ENCODE measurements at regions of chr3 and their contacts with region 1.

Region 1: GRCh38 chr3:69161587-69162307 is 39.4 kb upstream of the LMOD3 start:
- DNase-seq: peak; percentile 25
- ATAC-seq: peak; percentile 83
- H3K4me3 ChIP-seq: no peak overlapping the region
- H3K27ac ChIP-seq: no peak overlapping the region
- H3K4me1 ChIP-seq: no peaks in the 10 kb centered on the region
- H3K27me3 ChIP-seq: no peaks in the 10 kb centered on the region
- CTCF ChIP-seq: peak; percentile 89 to 95 (median 94); a peak in 5 of 6 replicates
- EP300 ChIP-seq: no peak
- POLR2A ChIP-seq: no peak
- RAD21 ChIP-seq: peak; percentile 100

Region 2: GRCh38 chr3:69129531-69129930 is 32.2 kb before region 1 on chr3:
- CTCF ChIA-PET with region 1: interaction called, 16 read pairs
- POLR2A ChIA-PET with region 1: no interaction called
- RAD21 ChIA-PET with region 1: interaction called, 6 read pairs
- SMC1A ChIA-PET with region 1: interaction called, 5 read pairs
- in situ Hi-C with region 1: no loop called
- intact Hi-C with region 1: no loop called
- DNase-seq: no peak
- ATAC-seq: no peak
- H3K4me3 ChIP-seq: no peak overlapping the region
- H3K27ac ChIP-seq: no peak overlapping the region
- H3K4me1 ChIP-seq: no peaks in the 10 kb centered on the region
- H3K27me3 ChIP-seq: no peaks in the 10 kb centered on the region; a peak in 1 of 4 replicates
- CTCF ChIP-seq: no peak
- EP300 ChIP-seq: no peak
- POLR2A ChIP-seq: no peak
- RAD21 ChIP-seq: no peak

Region 3: DNA sequence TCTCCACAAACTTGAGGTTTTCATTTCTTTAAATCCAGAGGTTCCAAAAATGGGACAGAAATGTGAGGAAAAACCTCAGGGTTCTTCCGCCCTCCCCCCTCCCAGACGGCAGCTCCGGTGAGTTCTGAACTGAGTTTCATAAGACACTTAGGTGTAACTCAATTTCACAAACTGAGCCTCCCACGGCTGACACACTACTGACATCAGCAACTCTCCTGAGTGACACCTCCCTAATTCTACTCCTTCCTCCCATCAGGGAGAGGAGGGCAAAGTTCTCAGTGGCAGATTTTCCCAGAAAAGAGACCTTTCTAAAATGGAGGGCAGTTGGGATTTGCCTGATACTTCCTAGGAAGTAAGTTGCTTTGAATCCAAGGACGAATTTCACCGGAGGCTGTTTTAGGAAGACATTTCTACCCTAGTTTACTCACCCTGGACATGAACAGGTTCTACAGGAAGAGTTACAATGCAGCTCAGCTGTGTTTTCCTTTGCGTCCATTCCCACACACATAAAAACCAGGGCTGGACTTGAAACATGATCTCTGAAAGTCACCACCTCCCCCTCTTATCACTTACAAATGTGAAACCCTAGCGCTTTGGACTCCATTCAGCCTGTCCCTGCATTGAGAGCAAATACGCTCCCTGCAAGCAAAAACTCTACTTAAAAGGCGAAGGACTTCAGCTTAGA is 38.8 kb after region 1 on chr3:
- CTCF ChIA-PET with region 1: interaction called, 16 read pairs
- POLR2A ChIA-PET with region 1: no interaction called
- RAD21 ChIA-PET with region 1: interaction called, 17 read pairs
- SMC1A ChIA-PET with region 1: interaction called, 48 read pairs
- in situ Hi-C with region 1: no loop called
- intact Hi-C with region 1: no loop called
- DNase-seq: no peak
- ATAC-seq: peak; percentile 38
- H3K4me3 ChIP-seq: no peak overlapping the region
- H3K27ac ChIP-seq: no peak overlapping the region
- H3K4me1 ChIP-seq: peaks cover 10% of the 10 kb centered on the region
- H3K27me3 ChIP-seq: no peaks in the 10 kb centered on the region
- CTCF ChIP-seq: no peak
- EP300 ChIP-seq: no peak
- POLR2A ChIP-seq: no peak
- RAD21 ChIP-seq: no peak

Region 4: GRCh38 chr3:69240651-69241568 is 79.2 kb after region 1 on chr3:
- CTCF ChIA-PET with region 1: interaction called, 161 read pairs
- POLR2A ChIA-PET with region 1: interaction called, 4 read pairs
- RAD21 ChIA-PET with region 1: interaction called, 77 read pairs
- SMC1A ChIA-PET with region 1: interaction called, 120 read pairs
- in situ Hi-C with region 1: no loop called
- intact Hi-C with region 1: no loop called
- DNase-seq: peak; percentile 48
- ATAC-seq: peak; percentile 79
- H3K4me3 ChIP-seq: no peak overlapping the region
- H3K27ac ChIP-seq: 0 out of 2 replicates have a peak overlapping the region, but pooled peaks have one; percentile 40
- H3K4me1 ChIP-seq: peaks cover 21% of the 10 kb centered on the region
- H3K27me3 ChIP-seq: no peaks in the 10 kb centered on the region
- CTCF ChIP-seq: no peak
- EP300 ChIP-seq: no peak
- POLR2A ChIP-seq: no peak
- RAD21 ChIP-seq: no peak

Region 5: GRCh38 chr3:69294014-69294775 is 132.4 kb after region 1 on chr3:
- CTCF ChIA-PET with region 1: interaction called, 625 read pairs
- POLR2A ChIA-PET with region 1: interaction called, 3 read pairs
- RAD21 ChIA-PET with region 1: interaction called, 15 read pairs
- SMC1A ChIA-PET with region 1: interaction called, 37 read pairs
- in situ Hi-C with region 1: no loop called
- intact Hi-C with region 1: no loop called
- DNase-seq: no peak
- ATAC-seq: peak; percentile 89
- H3K4me3 ChIP-seq: no peak overlapping the region
- H3K27ac ChIP-seq: no peak overlapping the region
- H3K4me1 ChIP-seq: peaks cover 5% of the 10 kb centered on the region
- H3K27me3 ChIP-seq: no peaks in the 10 kb centered on the region
- CTCF ChIP-seq: no peak
- EP300 ChIP-seq: peak in 1 of 2 experiments; percentile 35; a peak in 1 of 4 replicates
- POLR2A ChIP-seq: no peak
- RAD21 ChIP-seq: no peak

Region 6: DNA sequence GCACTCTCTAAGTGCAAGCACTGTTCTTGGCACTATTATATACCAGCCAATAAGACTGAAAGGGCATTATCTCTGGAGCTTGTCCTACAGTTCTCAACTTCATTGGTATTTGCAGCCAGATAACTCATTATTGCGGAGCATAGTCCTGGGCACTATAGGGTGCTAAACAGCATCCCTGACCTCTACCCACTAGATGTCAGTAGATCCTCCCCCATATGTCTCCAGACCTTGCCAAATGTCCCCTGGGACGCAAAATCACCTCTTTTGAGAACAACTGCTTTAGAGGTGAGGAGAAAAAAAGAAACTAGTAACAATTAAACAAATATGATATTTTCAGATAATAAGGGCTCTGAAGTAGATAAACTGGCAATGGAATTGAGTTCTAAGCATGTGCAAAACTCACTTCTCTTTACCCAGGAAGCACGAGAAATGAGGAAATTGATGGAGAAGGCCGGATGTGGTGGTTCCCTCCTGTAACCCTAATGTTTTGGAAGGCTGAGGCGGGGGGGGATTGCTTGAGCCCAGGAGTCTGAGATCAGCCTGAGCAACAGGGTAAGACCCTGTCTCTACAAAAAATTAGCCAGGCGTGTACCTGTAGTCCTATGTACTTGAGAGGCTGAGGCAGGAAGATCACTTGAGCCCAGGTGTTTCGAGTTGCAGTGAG is 162.7 kb after region 1 on chr3:
- CTCF ChIA-PET with region 1: interaction called, 75 read pairs
- POLR2A ChIA-PET with region 1: no interaction called
- RAD21 ChIA-PET with region 1: interaction called, 33 read pairs
- SMC1A ChIA-PET with region 1: interaction called, 45 read pairs
- in situ Hi-C with region 1: no loop called
- intact Hi-C with region 1: loop called (anchors 5 kb)
- DNase-seq: no peak
- ATAC-seq: peak; percentile 70
- H3K4me3 ChIP-seq: no peak overlapping the region
- H3K27ac ChIP-seq: no peak overlapping the region
- H3K4me1 ChIP-seq: peaks cover 28% of the 10 kb centered on the region
- H3K27me3 ChIP-seq: no peaks in the 10 kb centered on the region
- CTCF ChIP-seq: peak; percentile 71 to 81 (median 77)
- EP300 ChIP-seq: 0 out of 4 replicates have a peak, but pooled peaks of 1 of the 2 experiments have one; percentile 15
- POLR2A ChIP-seq: no peak
- RAD21 ChIP-seq: peak; percentile 98

Region 7: GRCh38 chr3:69671082-69671952 is 509.6 kb after region 1 on chr3:
- CTCF ChIA-PET with region 1: interaction called, 19 read pairs
- POLR2A ChIA-PET with region 1: no interaction called
- RAD21 ChIA-PET with region 1: interaction called, 9 read pairs
- SMC1A ChIA-PET with region 1: interaction called, 4 read pairs
- in situ Hi-C with region 1: loop called (anchors 10 kb)
- intact Hi-C with region 1: loop called (anchors 2 kb)
- DNase-seq: no peak
- ATAC-seq: peak; percentile 51; the same call in 1 of the 3 replicates
- H3K4me3 ChIP-seq: no peak overlapping the region
- H3K27ac ChIP-seq: no peak overlapping the region
- H3K4me1 ChIP-seq: no peaks in the 10 kb centered on the region
- H3K27me3 ChIP-seq: no peaks in the 10 kb centered on the region
- CTCF ChIP-seq: peak; percentile 50 to 63 (median 53); a peak in 5 of 6 replicates
- EP300 ChIP-seq: no peak
- POLR2A ChIP-seq: no peak
- RAD21 ChIP-seq: peak; percentile 69

Region 8: DNA sequence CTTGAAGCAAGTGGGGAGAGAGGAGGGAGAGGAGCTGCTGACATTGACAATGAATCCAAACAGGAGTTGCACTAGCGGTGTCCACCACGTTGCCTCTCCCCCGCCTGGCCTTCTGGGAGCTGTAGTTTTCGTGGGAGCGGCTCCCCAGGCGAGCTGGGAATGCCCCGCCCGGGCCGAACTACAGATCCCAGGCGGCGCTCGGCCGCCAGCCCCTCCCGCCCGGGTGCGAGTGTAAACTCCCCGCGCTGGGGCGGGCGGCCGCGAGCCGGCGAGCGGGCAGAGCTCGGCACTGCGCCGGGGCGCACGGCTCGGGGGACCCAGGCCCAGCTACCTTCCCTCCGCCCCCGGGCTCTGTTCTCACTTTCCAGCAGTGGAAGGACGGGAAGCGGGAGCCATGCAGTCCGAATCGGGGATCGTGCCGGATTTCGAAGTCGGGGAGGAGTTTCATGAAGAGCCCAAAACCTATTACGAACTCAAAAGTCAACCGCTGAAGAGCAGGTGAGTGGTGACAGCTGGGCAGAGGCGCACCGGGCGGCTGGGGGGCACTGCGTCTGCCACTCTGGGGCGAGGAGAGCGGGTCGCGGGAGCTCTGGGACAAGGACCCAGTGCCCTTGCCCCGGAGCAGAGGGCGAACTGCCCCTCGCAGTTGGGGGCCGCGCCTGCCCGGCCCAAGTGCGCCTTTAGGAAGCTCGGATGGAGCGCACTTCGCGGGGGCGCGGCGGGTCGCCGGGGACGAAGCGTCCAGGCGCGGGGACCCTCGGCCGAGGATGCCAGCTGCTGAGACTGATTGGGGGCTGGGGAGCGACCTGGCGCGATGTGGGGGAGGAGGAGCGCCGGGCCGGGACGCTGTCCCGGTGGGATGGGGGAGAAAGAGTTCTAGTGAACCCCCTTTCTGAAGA is 577.7 kb after region 1 on chr3 and contains the start of gene MITF:
- CTCF ChIA-PET with region 1: no interaction called
- POLR2A ChIA-PET with region 1: no interaction called
- RAD21 ChIA-PET with region 1: no interaction called
- SMC1A ChIA-PET with region 1: no interaction called
- in situ Hi-C with region 1: no loop called
- intact Hi-C with region 1: no loop called
- DNase-seq: peak; percentile 26
- ATAC-seq: peak; percentile 99
- H3K4me3 ChIP-seq: peak within 1 kb of the TSS; percentile 72
- H3K27ac ChIP-seq: no peak within 1 kb of the TSS
- H3K4me1 ChIP-seq: no peaks in the 10 kb centered on the region
- H3K27me3 ChIP-seq: peaks cover 0 to 3% of the 10 kb centered on the region in 2 experiments
- CTCF ChIP-seq: no peak
- EP300 ChIP-seq: no peak
- POLR2A ChIP-seq: no peak
- RAD21 ChIP-seq: no peak
- polyA plus RNA-seq, gene MITF: 0.02 TPM in 1 of 2 experiments, not detected in the other